Left cardiac atrium (tissue), 4 donors: ENCODE measurements at regions of chr21 and their contacts with region 1.

Region 1: GRCh38 chr21:17387030-17387617 is 125.7 kb upstream of the CXADR start:
- DNase-seq: peak; percentile 28
- ATAC-seq: peak in 1 of 2 donors; percentile 49

Region 2: GRCh38 chr21:17585875-17586450 is 198.8 kb after region 1 on chr21:
- intact Hi-C with region 1: loop called (anchors 2 to 10 kb)
- DNase-seq: no peak
- ATAC-seq: peak in 1 of 2 donors; percentile 24